Heart left ventricle (tissue), 16 donors: ENCODE measurements at regions of chr2 and their contacts with region 1.

Region 1: DNA sequence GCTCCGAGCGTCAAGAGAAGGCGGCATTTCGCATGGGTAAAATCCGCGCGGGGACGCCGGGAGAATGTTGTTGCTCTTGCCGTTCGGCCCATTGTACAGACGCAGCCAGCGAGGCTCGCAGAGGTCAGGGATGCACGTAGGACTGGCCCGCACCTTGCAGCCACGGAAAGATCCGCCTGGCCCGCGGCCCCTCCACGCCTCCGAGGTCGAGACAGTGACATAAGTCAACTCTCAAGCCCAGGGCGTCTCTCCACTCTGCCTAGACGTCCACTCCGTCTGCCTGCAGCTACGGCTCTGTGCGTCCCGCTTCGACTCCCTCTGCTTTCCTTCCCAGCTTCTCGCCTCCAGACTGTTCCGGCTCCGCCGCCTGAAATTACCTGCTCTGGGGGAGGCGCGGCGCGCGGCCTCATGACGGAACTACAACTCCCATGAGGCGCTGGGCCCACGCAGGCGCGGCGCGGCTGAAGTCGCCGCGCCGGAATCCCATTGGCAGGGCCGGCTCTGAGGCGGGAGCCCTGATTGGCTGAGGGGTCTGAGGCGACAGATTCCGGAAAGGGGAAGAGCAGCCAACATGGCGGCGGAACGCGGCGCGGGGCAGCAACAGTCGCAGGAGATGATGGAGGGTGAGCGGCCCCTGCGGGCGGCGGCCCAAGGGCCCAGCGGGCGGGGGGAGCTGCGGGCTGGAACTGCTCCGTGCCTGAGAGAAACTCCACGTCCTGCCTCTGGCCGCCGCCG is at the start of gene PPP1R7:
- DNase-seq: peak; percentile 95 to 97 (median 96)
- ATAC-seq: peak; percentile 94 to 98 (median 97)
- H3K4me3 ChIP-seq: peak within 1 kb of the TSS; percentile 69 to 100 (median 90)
- H3K27ac ChIP-seq: peak within 1 kb of the TSS; percentile 29 to 87 (median 84)
- H3K4me1 ChIP-seq: peaks cover 0 to 23% (median 15%) of the 10 kb centered on the region in 12 donors
- H3K27me3 ChIP-seq: no peaks in the 10 kb centered on the region
- CTCF ChIP-seq: peak in 2 of 12 donors; percentile 30 to 37
- POLR2A ChIP-seq: peak in 1 of 2 donors; percentile 80
- total RNA-seq, gene PPP1R7: 66.7 to 110 (median 74.7) TPM

Region 2: DNA sequence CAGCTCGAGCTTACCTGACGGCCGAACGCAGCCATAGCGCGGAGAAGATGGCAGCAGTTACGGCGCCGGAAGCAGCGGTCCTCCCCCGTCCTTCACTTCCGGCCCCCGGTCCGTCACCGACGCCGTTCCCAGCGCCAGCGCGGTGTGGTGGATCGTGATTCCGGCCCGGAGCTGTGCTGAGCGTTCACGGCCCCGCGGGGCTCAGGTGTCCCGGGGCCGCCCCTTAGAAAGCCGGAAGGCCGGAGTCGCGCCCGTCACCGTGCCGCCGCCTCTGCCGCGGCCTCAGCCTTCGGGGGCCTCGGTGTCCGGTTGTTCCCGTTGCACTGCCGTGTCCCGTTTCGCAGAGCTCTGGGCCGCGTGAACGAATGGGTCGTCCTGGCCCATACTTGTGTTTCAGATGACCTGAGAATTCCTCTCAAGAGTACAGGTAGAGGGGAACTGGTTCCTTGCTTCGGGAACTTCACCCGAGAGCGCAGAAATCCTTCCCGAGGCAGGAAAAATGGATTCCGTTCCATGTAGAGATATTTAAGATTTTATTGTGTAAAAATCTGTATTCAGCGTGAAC is 47.8 kb before region 1 on chr2 and contains the start of gene MTERF4:
- intact Hi-C with region 1: loop called in 4 of 10 experiments (anchors 2 to 5 kb)
- DNase-seq: peak; percentile 87 to 94 (median 90)
- ATAC-seq: peak; percentile 97 to 100 (median 99)
- H3K4me3 ChIP-seq: peak within 1 kb of the TSS; percentile 59 to 99 (median 86)
- H3K27ac ChIP-seq: peak within 1 kb of the TSS; percentile 68 to 92 (median 85)
- H3K4me1 ChIP-seq: peaks cover 5 to 26% (median 18%) of the 10 kb centered on the region in 12 donors
- H3K27me3 ChIP-seq: no peaks in the 10 kb centered on the region
- CTCF ChIP-seq: peak in 1 of 12 donors; percentile 5
- POLR2A ChIP-seq: no peak
- total RNA-seq, gene MTERF4: 16.4 to 29.1 (median 22.3) TPM

Region 3: DNA sequence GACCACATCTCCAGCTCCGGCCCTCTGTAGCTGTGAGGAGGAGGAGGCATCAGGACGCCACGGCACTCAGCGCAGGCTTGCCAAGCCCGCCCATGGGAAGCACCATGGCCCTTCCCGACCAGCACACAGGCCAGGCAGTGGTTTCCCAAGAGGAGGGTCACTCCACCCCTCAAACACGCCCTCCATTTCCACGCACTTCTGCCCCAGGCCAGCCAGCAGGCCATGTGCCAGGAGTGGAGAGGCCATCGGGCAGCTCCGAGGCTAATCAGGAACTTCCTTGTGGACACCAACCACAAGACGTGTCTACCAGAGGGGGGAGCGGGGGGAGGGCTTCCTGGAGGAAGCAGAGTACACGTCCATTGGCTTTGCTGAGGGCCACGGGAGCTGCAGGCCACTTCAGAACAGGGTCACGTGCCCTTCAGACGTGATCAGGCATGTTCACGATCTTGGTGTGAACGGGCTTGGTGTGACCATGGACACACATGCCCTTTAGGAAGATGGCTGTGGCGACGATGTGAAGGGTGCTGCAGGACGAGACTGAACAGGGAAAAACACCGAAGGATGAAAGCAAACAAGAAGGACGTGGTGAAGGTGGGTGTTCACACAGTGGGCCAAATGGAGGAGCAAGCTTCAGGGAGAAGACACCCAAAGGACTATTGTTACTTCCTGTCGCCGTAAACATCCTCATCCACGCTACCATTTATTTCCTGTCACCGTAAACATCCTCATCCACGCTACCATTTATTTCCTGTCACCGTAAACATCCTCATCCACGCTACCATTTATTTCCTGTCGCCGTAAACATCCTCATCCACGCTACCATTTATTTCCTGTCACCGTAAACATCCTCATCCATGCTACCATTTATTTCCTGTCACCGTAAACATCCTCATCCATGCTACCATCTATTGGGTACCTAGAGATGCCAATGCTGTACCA is 41.6 kb before region 1 on chr2:
- intact Hi-C with region 1: loop called in 4 of 10 experiments (anchors 2 to 5 kb)
- DNase-seq: peak in 1 of 5 donors; percentile 42
- ATAC-seq: no peak
- H3K4me3 ChIP-seq: no peak overlapping the region
- H3K27ac ChIP-seq: peak overlapping the region in 1 of 12 donors; percentile 21
- H3K4me1 ChIP-seq: peaks cover 0 to 1% (median 0%) of the 10 kb centered on the region in 12 donors
- H3K27me3 ChIP-seq: no peaks in the 10 kb centered on the region
- CTCF ChIP-seq: no peak
- POLR2A ChIP-seq: no peak

Region 4: DNA sequence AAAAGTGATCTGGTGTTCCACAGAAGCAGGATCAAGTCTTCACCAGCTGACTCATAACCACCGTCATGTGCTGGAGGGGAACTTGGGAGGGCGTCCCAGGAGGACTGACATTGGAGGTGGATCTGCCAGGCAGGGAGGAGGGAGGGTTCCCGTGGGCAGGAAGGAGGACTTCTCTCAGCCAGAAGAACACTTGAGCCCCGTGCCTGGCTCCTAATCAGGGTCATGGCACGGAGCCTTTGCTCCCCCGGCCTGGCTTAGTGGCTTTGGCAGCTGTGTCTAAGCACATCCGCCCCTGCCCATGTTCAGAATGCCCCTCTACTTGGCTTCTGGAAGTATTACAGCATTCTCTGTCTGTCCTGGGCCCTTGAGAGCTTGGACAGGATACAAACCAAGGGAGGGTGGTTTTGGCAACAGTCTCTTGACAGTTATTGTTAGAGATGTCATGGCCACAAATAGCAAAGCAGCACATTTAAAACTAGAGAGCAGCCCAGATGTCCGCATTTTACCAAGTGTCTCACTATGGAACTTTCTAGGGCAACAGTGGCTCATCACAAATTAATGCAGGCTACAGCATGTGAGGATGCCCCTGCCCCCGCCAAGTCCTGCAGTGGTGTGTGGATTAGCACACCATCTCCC is 11.7 kb after region 1 on chr2:
- intact Hi-C with region 1: loop called in 1 of 10 experiments (anchors 1 kb)
- DNase-seq: peak; percentile 79 to 90 (median 83)
- ATAC-seq: peak; percentile 94 to 96 (median 96)
- H3K4me3 ChIP-seq: no peak overlapping the region
- H3K27ac ChIP-seq: peak overlapping the region; percentile 14 to 88 (median 78)
- H3K4me1 ChIP-seq: peaks cover 0 to 26% (median 18%) of the 10 kb centered on the region in 12 donors
- H3K27me3 ChIP-seq: no peaks in the 10 kb centered on the region
- CTCF ChIP-seq: peak in 1 of 12 donors; percentile 12
- POLR2A ChIP-seq: no peak

Region 5: GRCh38 chr2:241211282-241211681 is 61.2 kb after region 1 on chr2:
- intact Hi-C with region 1: loop called in 3 of 10 experiments (anchors 2 to 5 kb)
- DNase-seq: no peak
- ATAC-seq: no peak
- H3K4me3 ChIP-seq: no peak overlapping the region
- H3K27ac ChIP-seq: no peak overlapping the region
- H3K4me1 ChIP-seq: no peaks in the 10 kb centered on the region
- H3K27me3 ChIP-seq: no peaks in the 10 kb centered on the region
- CTCF ChIP-seq: no peak
- POLR2A ChIP-seq: no peak

Region 6: DNA sequence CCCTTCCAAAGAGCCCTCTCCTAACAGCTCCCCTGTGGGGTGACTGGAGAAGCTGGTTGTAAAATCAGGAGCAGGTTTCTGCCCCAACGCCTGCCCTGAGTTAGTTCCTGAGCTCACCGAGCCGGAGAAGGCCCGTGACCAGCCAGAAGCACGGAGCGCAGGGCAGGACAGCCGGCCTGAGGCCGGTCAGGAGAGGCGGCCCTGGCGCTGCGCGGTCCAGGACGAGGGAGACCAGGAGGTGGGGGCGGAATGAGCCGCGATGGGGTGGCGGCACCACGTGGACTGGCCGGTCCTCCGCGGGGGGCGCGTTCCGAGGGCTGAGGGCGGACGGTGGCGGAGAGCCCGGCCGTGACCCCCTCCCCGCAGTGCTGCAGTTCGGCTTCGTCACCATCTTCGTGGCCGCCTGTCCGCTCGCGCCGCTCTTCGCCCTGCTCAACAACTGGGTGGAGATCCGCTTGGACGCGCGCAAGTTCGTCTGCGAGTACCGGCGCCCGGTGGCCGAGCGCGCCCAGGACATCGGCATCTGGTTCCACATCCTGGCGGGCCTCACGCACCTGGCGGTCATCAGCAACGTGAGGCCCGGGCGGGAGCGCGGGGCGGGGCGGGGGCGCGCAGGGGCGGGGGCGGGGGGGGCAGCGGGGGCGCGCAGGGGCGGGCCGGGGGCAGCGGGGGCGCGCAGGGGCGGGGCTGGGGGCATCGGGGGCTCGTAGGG is 67.4 kb after region 1 on chr2:
- intact Hi-C with region 1: loop called in 3 of 10 experiments (anchors 2 to 5 kb)
- DNase-seq: peak; percentile 69 to 81 (median 73)
- ATAC-seq: peak; percentile 30 to 85 (median 84)
- H3K4me3 ChIP-seq: peak overlapping the region; percentile 14 to 93 (median 60)
- H3K27ac ChIP-seq: peak overlapping the region in 11 of 12 donors; percentile 26 to 89 (median 83)
- H3K4me1 ChIP-seq: peaks cover 0 to 17% (median 10%) of the 10 kb centered on the region in 12 donors
- H3K27me3 ChIP-seq: no peaks in the 10 kb centered on the region
- CTCF ChIP-seq: peak in 2 of 12 donors; percentile 14 to 18
- POLR2A ChIP-seq: no peak

Region 7: DNA sequence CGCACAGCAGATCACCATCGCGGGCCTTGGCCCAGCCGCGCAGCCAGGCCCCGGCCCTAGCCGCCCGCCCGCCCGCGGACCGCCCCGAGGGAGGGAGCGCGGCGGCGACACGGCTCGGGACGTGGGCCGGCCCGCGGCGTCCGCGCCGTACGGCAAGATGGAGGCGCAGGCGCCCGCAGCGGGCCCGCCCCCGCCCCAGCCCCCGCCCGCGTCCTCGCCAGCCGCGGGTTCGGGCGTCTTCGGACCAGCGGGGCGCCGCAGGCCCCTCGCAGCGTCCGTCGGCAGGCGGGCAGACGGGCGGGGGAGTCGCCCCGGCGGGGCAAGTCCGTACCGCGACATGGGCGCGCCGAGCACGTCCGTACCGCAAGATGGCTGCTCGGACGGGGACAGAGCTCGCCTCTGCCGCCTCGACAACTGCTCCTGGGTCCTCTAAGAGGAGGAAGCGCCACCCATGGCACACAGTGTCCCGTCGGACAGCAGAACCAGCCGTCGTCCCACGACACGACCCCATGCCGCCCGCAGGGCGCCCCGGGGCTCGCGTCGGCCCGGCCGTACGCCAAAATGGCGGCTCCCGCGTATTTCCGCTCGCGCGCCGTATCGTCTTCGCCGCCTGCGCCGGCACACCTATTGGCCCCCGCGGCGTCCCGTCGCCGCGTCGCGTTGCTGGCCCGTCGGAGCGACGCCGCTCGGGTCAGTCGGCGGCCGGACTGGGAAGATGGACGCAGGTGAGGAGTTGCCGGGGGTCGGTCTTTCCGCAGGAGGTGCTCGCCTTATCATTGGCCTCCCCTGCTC is 487.1 kb after region 1 on chr2 and contains the starts of genes ATG4B and THAP4:
- intact Hi-C with region 1: loop called in 1 of 10 experiments (anchors 10 kb)
- DNase-seq: peak; percentile 89 to 94 (median 92)
- ATAC-seq: peak; percentile 78 to 92 (median 90)
- H3K4me3 ChIP-seq: peak within 1 kb of the TSS; percentile 55 to 94 (median 88)
- H3K27ac ChIP-seq: peak within 1 kb of the TSS; percentile 96 to 100 (median 99)
- H3K4me1 ChIP-seq: peaks cover 8 to 57% (median 45%) of the 10 kb centered on the region in 12 donors
- H3K27me3 ChIP-seq: no peaks in the 10 kb centered on the region
- CTCF ChIP-seq: no peak
- POLR2A ChIP-seq: peak in 1 of 2 donors; percentile 59
- total RNA-seq, gene ATG4B: 37.8 to 67.9 (median 48.3) TPM
- total RNA-seq, gene THAP4: 61.7 to 106 (median 74.2) TPM